Psoas muscle (tissue), 8 donors: ENCODE measurements at regions of chr1 and their contacts with region 1.

Region 1: GRCh38 chr1:59041646-59042277 is 255.1 kb upstream of the FGGY start:
- DNase-seq: peak in 1 of 2 donors; percentile 62
- ATAC-seq: no peak
- H3K4me3 ChIP-seq: no peak overlapping the region
- H3K27ac ChIP-seq: no peak overlapping the region
- H3K4me1 ChIP-seq: peaks cover 20% of the 10 kb centered on the region
- H3K27me3 ChIP-seq: no peaks in the 10 kb centered on the region
- CTCF ChIP-seq: no peak

Region 2: DNA sequence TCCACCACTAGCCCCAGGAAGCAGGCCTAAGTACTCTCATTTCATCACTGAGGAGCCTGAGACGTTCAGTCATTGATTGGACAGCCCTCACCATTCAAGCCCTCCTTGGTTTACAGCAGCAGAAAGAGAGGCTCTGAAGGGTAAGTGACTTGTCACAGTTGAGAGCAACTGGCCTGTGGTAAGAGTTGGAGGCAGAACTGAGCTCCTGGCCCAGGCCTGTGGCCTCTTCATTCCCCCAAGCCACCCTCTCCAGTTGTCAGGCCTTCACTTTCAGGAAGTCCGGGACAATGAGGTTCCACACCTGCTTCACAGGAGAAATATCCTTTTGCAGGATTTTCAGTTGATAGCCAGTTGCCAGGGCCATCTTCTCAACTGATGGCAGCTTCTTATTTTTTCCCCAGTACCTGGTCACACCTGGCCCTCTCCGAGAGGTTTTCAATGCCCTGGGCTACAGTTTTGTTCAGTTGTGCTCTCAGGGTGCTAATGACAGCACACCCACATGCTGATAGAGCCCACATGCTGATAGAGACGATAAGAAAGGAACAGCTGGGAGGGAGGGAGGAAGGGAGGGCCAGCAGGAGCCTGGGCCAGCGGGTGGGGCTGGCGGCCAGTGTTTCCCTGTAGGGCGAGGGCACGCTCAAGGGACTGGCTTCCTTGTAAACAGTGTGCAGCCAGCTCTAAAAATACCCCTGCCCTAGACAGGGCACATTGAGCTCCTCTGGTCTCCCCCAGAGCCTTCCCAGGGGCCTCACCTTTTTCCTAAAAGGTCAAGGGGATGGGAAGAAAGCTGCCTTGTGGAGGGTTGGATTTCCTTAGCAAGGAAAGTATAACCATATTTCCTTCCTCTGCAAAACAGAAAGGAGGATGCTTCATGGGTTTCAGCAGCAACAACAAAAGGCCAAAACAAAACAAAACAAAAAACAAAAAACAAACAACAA is 145.2 kb before region 1 on chr1:
- intact Hi-C with region 1: no loop called
- DNase-seq: peak; percentile 73 to 92
- ATAC-seq: peak; percentile 92 to 95 (median 92)
- H3K4me3 ChIP-seq: no peak overlapping the region
- H3K27ac ChIP-seq: peak overlapping the region; percentile 95
- H3K4me1 ChIP-seq: peaks cover 87% of the 10 kb centered on the region
- H3K27me3 ChIP-seq: no peaks in the 10 kb centered on the region
- CTCF ChIP-seq: no peak

Region 3: DNA sequence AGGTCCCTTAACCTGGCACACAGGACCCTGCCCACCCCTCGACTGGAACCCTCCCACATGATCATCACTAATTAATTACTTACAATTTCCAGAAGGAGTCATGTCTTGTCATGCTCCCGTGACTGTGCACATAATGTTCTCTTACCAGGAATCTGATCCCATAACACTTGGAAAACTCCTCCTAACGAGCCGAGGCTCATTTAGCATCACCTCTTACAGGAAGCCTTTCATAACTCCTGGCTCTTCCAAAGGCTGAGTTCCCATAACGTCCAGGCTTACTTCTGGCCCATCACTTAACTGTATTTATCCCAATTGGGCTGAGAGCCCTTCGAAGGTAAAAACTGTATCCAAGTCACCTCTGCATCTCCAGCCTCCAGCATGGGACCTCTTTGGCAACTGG is 110.0 kb before region 1 on chr1:
- intact Hi-C with region 1: loop called in 1 of 2 experiments (anchors 1 kb)
- DNase-seq: no peak
- ATAC-seq: peak in 2 of 4 donors; percentile 47 to 60
- H3K4me3 ChIP-seq: no peak overlapping the region
- H3K27ac ChIP-seq: no peak overlapping the region
- H3K4me1 ChIP-seq: no peaks in the 10 kb centered on the region
- H3K27me3 ChIP-seq: no peaks in the 10 kb centered on the region
- CTCF ChIP-seq: no peak